HepG2 (cell line): ENCODE measurements at regions of chr4 and their contacts with region 1.

Region 1: GRCh38 chr4:102674881-102675540 is 85.8 kb downstream of the MANBA start:
- DNase-seq: peak; percentile 11
- ATAC-seq: no peak
- H3K4me3 ChIP-seq: no peak overlapping the region
- H3K27ac ChIP-seq: no peak overlapping the region
- H3K4me1 ChIP-seq: no peaks in the 10 kb centered on the region
- H3K27me3 ChIP-seq: no peaks in the 10 kb centered on the region
- CTCF ChIP-seq: no peak
- EP300 ChIP-seq: no peak
- POLR2A ChIP-seq: no peak
- RAD21 ChIP-seq: no peak

Region 2: DNA sequence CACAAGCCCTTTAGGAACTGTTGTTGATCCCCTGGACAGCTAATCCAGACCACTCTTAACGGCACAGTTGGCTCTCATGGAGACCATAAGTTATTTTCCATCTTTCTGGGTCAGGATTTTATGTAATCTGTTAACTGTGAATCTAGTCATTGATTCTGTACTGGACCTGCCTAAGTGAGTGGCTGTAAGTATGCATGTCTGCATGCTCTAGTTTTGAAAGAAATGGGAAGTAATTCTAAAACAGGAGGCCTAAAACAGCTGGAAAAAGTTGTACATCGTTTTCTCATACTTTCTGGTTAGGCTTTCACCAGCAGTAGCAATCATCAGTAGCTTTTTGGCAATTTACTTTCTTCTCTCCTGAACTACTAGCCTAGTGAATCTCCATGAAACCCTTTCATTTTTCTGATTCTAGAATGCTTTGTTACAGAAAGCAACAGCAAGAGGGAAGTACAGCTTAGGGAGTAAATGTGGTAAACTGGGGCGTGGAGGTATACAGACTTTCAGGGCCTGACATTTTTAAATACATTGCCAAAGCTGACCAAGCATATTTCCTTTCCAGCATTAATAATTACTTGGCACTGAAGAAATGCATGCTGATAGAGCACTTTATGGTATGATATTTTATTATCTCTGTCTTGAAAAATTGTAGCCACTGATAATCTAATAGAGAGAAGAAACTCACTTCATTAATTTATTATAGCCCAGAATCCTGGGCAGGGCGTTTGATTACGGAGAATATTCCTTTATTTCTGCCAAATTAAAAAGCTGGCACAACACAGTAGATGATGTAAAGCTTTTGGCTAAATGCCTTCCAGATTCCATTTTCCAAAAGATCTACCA is 681.8 kb before region 1 on chr4:
- CTCF ChIA-PET with region 1: no interaction called
- POLR2A ChIA-PET with region 1: no interaction called
- in situ Hi-C with region 1: no loop called
- intact Hi-C with region 1: no loop called
- DNase-seq: no peak
- ATAC-seq: no peak
- H3K4me3 ChIP-seq: no peak overlapping the region
- H3K27ac ChIP-seq: no peak overlapping the region
- H3K4me1 ChIP-seq: no peaks in the 10 kb centered on the region
- H3K27me3 ChIP-seq: no peaks in the 10 kb centered on the region
- CTCF ChIP-seq: no peak
- EP300 ChIP-seq: no peak
- POLR2A ChIP-seq: no peak
- RAD21 ChIP-seq: no peak

Region 3: GRCh38 chr4:102642631-102643298 is 32.2 kb before region 1 on chr4:
- CTCF ChIA-PET with region 1: no interaction called
- POLR2A ChIA-PET with region 1: no interaction called
- in situ Hi-C with region 1: no loop called
- intact Hi-C with region 1: loop called (anchors 2 kb)
- DNase-seq: no peak
- ATAC-seq: no peak
- H3K4me3 ChIP-seq: no peak overlapping the region
- H3K27ac ChIP-seq: no peak overlapping the region
- H3K4me1 ChIP-seq: no peaks in the 10 kb centered on the region
- H3K27me3 ChIP-seq: no peaks in the 10 kb centered on the region
- CTCF ChIP-seq: no peak
- EP300 ChIP-seq: no peak
- POLR2A ChIP-seq: no peak
- RAD21 ChIP-seq: no peak

Region 4: GRCh38 chr4:102657206-102657605 is 17.8 kb before region 1 on chr4:
- CTCF ChIA-PET with region 1: no interaction called
- POLR2A ChIA-PET with region 1: no interaction called
- in situ Hi-C with region 1: no loop called
- intact Hi-C with region 1: no loop called
- DNase-seq: no peak
- ATAC-seq: no peak
- H3K4me3 ChIP-seq: no peak overlapping the region
- H3K27ac ChIP-seq: no peak overlapping the region
- H3K4me1 ChIP-seq: no peaks in the 10 kb centered on the region
- H3K27me3 ChIP-seq: no peaks in the 10 kb centered on the region
- CTCF ChIP-seq: no peak
- EP300 ChIP-seq: no peak
- POLR2A ChIP-seq: no peak
- RAD21 ChIP-seq: no peak